Calu3 (cell line): ENCODE measurements at regions of chr4 and their contacts with region 1.

Region 1: DNA sequence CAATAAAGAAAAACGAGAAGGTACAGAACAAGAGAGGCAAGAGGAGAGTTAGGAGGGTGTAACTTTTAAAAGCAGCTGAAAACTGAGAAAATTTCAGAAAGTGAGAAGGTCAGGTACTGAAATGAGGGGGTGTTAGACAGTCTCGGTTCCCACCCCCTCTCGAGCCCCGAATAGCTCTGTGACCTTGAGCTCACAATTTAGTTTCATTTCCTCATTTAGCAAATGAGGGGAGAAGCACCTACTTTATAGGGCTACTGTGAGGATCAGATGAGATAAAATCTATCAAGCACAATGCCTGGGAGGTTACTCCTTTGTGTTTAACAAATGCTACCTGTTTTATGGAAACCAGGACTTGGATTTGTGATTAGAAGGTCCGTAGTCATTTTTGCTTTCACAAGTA is 4.9 kb downstream of the UGT8 start:
- DNase-seq: no peak
- H3K4me3 Mint-ChIP-seq: no peak overlapping the region
- H3K27ac Mint-ChIP-seq: no peak overlapping the region
- H3K4me1 Mint-ChIP-seq: no peaks in the 10 kb centered on the region
- H3K27me3 Mint-ChIP-seq: no peaks in the 10 kb centered on the region
- CTCF ChIP-seq: no peak

Region 2: GRCh38 chr4:114509340-114509739 is 94.2 kb before region 1 on chr4:
- CTCF ChIA-PET with region 1: interaction called, 3 read pairs
- intact Hi-C with region 1: loop called (anchors 5 kb)
- DNase-seq: no peak
- H3K4me3 Mint-ChIP-seq: no peak overlapping the region
- H3K27ac Mint-ChIP-seq: no peak overlapping the region
- H3K4me1 Mint-ChIP-seq: peaks cover 9% of the 10 kb centered on the region
- H3K27me3 Mint-ChIP-seq: peaks cover 63% of the 10 kb centered on the region
- CTCF ChIP-seq: no peak

Region 3: GRCh38 chr4:114577386-114577785 is 26.1 kb before region 1 on chr4:
- CTCF ChIA-PET with region 1: no interaction called
- intact Hi-C with region 1: no loop called
- DNase-seq: no peak
- H3K4me3 Mint-ChIP-seq: no peak overlapping the region
- H3K27ac Mint-ChIP-seq: no peak overlapping the region
- H3K4me1 Mint-ChIP-seq: no peaks in the 10 kb centered on the region
- H3K27me3 Mint-ChIP-seq: no peaks in the 10 kb centered on the region
- CTCF ChIP-seq: no peak

Region 4: DNA sequence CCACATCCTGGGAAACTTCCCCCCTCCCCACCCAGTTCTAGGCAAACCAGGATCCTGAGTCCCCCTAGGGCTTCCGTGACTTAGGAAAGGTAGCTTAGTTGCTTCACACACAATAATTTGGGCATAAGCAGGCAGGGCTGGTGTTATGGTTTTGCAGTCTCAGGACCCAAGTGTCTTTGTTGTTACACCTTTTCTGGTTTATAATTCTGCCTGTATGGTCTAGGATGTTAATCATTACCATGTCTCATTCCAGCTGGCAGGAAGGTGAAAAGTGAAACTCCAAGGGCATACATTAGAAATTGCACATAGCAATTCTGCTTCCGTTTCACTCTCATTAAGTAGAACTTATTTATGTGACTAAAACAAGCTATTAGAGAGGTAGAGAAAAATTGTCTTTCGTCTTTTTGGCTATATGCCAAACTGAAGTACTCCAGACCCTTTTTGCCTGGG is 12.0 kb after region 1 on chr4:
- CTCF ChIA-PET with region 1: interaction called, 10 read pairs
- intact Hi-C with region 1: no loop called
- DNase-seq: no peak
- H3K4me3 Mint-ChIP-seq: peak overlapping the region; percentile 87
- H3K27ac Mint-ChIP-seq: peak overlapping the region; percentile 81
- H3K4me1 Mint-ChIP-seq: peaks cover 5% of the 10 kb centered on the region
- H3K27me3 Mint-ChIP-seq: no peaks in the 10 kb centered on the region
- CTCF ChIP-seq: no peak